ENCODE measurements at regions of chr17 and their contacts with region 1.

Region 1: GRCh38 chr17:44186307-44187130 is at the start of gene TMUB2:
- DNase-seq: peak; percentile 100
- H3K4me3 Mint-ChIP-seq: peak within 1 kb of the TSS; percentile 100
- H3K27ac Mint-ChIP-seq: peak within 1 kb of the TSS; percentile 99
- H3K4me1 Mint-ChIP-seq: peaks cover 33% of the 10 kb centered on the region
- H3K27me3 Mint-ChIP-seq: no peaks in the 10 kb centered on the region
- total RNA-seq, gene TMUB2: 16.1 and 19.0 TPM in 2 replicates

Region 2: DNA sequence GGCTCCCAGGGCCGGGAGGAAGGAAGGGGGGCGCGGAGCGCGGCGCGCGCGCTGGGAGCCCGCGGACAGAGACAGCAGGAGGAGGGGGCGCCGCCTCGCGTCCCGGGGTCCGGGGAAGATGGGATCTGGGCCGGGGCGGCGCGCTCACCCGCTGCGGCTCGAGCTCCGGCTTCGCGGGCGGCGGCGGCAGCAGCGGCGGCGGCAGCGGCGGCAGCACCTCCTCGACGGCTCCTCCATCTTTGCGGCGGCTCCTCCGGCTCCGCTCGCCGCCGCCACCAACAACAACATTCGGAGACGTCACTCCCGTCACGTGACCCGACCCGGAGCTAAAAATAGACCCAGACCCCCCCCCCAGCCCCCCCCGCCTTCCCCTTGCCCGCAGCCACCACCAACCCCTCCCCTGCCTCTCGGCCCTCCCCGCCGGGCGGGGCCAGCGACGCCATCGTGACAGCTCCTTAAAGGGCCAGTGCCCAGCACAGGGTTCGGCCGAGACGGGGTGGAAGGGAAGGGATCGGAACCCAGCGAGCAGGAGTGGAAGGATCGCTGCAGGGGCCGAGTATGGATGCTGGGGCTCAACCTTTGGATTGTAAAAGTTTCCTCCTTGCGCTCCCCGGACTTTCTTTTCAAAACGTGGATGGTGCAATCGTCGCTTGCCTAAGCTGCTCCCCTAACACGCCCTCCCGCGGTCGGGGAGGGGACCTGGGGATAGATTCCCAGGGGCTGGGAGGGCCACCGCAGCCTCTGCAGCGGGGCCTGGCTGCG is 63.0 kb before region 1 on chr17 and contains the start of gene HDAC5:
- intact Hi-C with region 1: loop called (anchors 1 kb)
- DNase-seq: peak; percentile 99
- H3K4me3 Mint-ChIP-seq: peak within 1 kb of the TSS; percentile 95
- H3K27ac Mint-ChIP-seq: peak within 1 kb of the TSS; percentile 97
- H3K4me1 Mint-ChIP-seq: peaks cover 24% of the 10 kb centered on the region
- H3K27me3 Mint-ChIP-seq: peaks cover 2% of the 10 kb centered on the region
- total RNA-seq, gene HDAC5: 16.1 and 17.7 TPM in 2 replicates

Region 3: DNA sequence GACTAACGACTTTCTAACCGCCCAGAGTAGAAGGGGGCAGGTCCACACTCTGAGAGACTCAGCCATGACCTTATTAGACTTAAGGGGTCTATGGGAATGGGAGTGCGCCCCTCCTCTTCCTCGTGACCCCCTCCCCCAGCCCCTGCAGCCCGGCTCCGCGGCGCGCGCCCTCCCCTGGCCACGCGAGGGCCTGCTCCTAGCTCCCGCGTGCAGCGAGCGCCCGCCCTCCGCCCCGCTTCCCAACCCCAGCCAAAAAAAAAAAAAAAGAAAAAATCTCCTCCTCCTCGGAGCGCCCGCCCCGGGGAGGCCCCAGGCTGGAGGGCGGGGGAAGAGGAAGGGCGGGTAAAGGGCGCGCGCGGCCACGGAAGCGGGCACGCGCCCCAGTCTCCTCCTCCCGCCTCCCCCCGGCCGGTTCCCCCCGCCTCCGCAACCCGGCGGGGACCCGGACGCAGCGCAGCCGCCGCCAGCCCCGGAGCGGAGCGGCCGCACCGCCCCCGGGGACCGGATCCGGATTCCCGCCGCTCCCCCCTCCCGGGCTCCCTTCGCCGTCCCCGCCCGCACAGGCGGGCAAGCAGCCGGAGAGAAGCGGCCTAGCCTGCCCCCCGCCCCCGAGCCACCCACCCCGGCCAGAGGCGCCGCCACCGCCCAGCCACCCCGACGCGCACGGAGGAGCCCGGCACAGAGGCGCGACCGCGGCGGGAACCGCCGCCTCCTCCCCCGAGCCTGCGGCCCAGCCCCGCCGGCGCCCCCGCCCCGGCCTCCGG is 32.0 kb after region 1 on chr17:
- intact Hi-C with region 1: loop called (anchors 1 kb)
- DNase-seq: peak; percentile 96
- H3K4me3 Mint-ChIP-seq: peak overlapping the region; percentile 97
- H3K27ac Mint-ChIP-seq: peak overlapping the region; percentile 97
- H3K4me1 Mint-ChIP-seq: peaks cover 52% of the 10 kb centered on the region
- H3K27me3 Mint-ChIP-seq: peaks cover 2% of the 10 kb centered on the region

Region 4: GRCh38 chr17:44338702-44339101 is 152.2 kb after region 1 on chr17:
- intact Hi-C with region 1: no loop called
- DNase-seq: no peak
- H3K4me3 Mint-ChIP-seq: no peak overlapping the region
- H3K27ac Mint-ChIP-seq: no peak overlapping the region
- H3K4me1 Mint-ChIP-seq: no peaks in the 10 kb centered on the region
- H3K27me3 Mint-ChIP-seq: peaks cover 14% of the 10 kb centered on the region

Region 5: GRCh38 chr17:44385287-44386181 is 199.0 kb after region 1 on chr17:
- intact Hi-C with region 1: no loop called
- DNase-seq: peak; percentile 95
- H3K4me3 Mint-ChIP-seq: peak overlapping the region; percentile 76
- H3K27ac Mint-ChIP-seq: peak overlapping the region; percentile 38
- H3K4me1 Mint-ChIP-seq: peaks cover 13% of the 10 kb centered on the region
- H3K27me3 Mint-ChIP-seq: peaks cover 21% of the 10 kb centered on the region